ENCODE measurements at regions of chr2 and their contacts with region 1.

Region 1: DNA sequence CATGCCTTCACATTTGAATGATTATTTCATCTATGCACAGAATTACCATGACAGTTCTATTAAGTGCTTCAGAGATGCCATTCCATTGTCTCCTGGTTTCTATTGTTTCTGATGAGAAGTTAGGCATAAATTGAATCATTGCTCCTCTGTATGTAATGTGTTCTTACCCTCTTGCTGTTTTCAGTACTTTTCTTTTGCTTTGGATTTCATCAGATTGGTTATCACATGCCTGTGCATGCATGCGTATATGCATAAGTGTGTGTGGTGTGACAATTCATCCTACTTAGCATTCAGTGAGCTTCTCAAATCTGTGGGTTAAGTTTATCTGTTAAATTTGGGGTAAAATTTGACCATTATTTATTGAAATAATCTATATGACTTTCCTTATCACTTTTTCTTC is 263.3 kb upstream of the RND3 start:
- DNase-seq: no peak
- ATAC-seq: no peak
- H3K4me3 ChIP-seq: no peak overlapping the region
- H3K27ac ChIP-seq: no peak overlapping the region
- H3K4me1 ChIP-seq: no peaks in the 10 kb centered on the region
- H3K27me3 ChIP-seq: no peaks in the 10 kb centered on the region
- CTCF ChIP-seq: no peak

Region 2: DNA sequence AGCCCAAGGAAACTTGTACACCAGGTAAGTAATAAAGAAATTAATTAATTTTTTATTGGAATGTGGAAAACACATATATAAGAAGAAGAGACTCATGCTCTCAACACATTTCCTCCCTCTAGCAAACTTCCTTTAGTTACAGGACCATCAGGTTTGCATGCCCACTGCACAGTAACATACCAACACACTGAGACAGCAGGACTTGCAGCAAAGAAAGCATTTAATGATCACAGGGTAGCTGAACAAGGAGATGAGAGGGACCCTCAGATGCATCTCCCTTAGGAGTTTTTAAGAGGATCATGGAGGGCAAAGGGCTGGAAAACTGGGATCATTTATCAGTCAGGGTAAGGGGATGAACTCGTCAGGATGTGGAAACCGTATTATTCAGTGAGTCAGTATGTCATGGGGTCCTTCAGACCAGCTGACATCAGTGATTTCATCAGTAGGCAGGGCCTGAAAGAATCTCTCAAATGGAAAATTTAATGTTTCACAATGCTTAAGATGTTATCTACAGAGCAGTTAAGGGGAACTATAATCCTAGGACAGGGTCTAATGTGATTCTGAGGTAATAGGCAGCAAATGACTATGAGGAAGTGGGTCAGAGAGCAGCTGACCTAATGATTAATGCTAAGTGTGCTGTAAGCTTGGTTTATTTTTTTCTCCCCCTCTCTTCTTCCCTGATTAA is 69.5 kb before region 1 on chr2:
- CTCF ChIA-PET with region 1: no interaction called
- POLR2A ChIA-PET with region 1: interaction called, 12 read pairs
- intact Hi-C with region 1: no loop called
- DNase-seq: peak; percentile 86
- ATAC-seq: peak; percentile 79
- H3K4me3 ChIP-seq: no peak overlapping the region
- H3K27ac ChIP-seq: peak overlapping the region; percentile 93
- H3K4me1 ChIP-seq: peaks cover 45% of the 10 kb centered on the region
- H3K27me3 ChIP-seq: no peaks in the 10 kb centered on the region
- CTCF ChIP-seq: no peak

Measured in PC-3 (cell line).